ENCODE measurements at regions of chr1 and their contacts with region 1.

Region 1: DNA sequence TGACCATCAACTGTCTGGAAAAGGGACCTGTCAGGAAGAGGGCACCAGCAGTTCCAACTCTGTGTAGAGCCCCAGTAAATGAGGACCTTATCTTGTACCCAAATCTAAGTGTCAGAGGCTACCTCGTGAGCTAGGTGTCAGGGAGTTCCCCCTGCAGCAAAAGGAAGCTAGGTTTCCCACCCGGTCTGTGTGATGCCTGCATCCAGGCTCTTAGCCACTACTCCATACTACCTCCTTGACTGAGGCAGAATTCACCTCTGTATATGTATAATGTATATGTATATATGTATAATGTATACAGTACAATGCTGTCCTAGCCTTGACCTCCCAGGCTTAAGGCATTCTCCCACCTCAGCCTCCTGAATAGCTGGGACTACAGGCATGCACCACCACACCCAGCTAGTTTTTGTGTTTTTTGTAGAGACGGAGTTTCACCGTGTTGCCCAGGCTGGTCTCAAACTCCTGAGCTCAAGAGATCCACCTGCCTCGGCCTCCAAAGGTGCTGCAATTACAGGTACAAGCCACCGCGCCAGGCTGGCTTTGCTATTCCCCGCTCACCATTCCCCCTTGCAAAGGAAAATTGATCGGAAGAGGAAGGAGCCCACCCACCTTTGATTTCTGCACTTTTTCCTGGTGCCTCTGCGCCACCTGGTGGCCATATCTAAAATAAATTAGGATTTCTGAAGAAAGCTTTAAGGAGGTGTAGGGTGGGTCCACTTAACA is 15.7 kb upstream of the LUZP1 start:
- DNase-seq: peak; percentile 46
- ATAC-seq: peak; percentile 44
- H3K4me3 Mint-ChIP-seq: peak overlapping the region; percentile 49
- H3K27ac Mint-ChIP-seq: no peak overlapping the region
- H3K4me1 Mint-ChIP-seq: peaks cover 4% of the 10 kb centered on the region
- H3K27me3 Mint-ChIP-seq: no peaks in the 10 kb centered on the region

Region 2: DNA sequence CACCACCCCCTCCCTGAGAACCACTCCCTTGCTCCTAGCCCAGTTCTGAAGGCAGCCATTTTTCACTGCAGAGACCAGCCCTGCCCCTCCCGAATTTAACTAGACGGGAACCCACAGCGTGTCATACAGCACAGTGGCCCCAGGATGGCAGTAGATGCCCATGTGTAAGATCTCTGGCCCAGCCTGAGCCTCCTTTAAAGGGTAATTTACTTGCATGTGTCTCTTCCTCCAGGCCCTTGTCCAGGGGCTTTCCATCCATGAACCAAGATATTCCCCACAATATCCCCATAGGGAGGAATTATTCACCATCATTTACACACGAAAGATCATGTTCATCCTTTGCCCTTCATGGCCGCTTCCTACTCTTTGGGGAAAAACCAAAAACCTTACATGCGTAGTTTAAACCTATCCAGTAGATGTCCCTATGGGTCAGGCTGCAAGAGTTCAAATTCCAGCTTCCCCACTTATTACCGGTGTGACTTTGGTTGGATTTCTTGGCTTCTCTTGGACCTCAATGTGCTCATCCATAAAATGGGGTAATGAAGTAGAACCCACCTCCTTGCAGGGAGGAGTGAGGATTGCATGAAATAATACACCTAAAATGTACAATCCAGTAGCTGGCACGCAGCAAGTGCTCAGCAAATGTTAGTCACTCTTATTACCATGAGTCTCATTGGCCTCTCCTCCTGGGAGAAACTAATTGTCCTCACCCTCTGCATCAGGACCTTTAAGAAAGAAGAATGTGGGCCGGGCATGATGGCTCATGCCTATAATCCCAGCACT is 207.7 kb before region 1 on chr1:
- CTCF ChIA-PET with region 1: interaction called, 7 read pairs
- POLR2A ChIA-PET with region 1: no interaction called
- intact Hi-C with region 1: loop called (anchors 1 to 2 kb)
- DNase-seq: peak; percentile 74
- ATAC-seq: peak; percentile 95
- H3K4me3 Mint-ChIP-seq: no peak overlapping the region
- H3K27ac Mint-ChIP-seq: no peak overlapping the region
- H3K4me1 Mint-ChIP-seq: no peaks in the 10 kb centered on the region
- H3K27me3 Mint-ChIP-seq: peaks cover 13% of the 10 kb centered on the region

Region 3: DNA sequence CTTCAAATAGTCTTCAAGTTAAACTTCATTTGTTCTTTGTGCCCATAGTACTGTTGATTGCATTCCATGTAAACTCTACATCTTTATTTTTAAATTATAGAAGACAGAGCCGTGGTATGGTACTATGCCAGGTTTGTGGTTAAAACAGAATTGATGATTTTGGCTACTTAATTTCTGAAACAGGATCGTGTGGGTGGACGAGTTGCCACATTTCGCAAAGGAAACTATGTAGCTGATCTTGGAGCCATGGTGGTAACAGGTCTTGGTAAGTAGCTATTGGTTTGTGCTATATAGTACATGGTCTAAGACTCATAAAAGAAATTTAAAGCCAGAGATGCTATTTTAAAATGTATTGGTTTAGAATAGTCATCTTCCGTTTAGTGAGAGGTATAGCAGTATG is 127.1 kb before region 1 on chr1:
- CTCF ChIA-PET with region 1: interaction called, 15 read pairs
- POLR2A ChIA-PET with region 1: no interaction called
- intact Hi-C with region 1: no loop called
- DNase-seq: no peak
- ATAC-seq: peak; percentile 33
- H3K4me3 Mint-ChIP-seq: no peak overlapping the region
- H3K27ac Mint-ChIP-seq: no peak overlapping the region
- H3K4me1 Mint-ChIP-seq: no peaks in the 10 kb centered on the region
- H3K27me3 Mint-ChIP-seq: no peaks in the 10 kb centered on the region

Region 4: DNA sequence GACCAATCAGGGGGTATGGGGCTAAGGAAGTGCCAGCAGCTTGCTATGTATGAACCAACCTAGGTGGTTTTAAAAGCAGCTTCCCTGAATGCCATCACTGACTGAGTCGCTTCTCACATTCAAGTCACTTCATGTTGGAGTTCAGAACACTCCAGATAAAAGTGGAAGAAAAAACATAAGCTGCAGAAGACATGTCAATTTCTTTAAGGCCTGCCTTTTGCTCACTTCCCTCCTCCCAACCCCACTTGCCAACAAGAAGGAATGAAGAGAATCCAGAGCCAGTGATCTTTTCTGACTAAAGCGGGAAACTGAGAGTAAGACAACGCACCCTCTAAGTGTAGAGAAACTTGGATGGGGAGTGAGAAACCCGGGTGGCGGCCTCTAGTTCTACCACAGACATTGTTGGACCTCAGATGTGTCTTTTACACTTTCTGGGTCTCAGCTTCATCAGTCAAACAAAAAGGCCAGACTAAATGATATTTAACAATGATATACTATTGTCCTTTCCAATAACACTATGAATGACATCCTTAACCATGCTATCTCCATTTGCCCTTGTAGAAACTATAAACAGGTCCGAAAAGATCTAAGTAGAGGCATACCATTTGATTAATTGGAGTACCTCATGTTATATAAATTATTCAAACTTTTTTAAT is 69.8 kb before region 1 on chr1:
- CTCF ChIA-PET with region 1: interaction called, 73 read pairs
- POLR2A ChIA-PET with region 1: no interaction called
- intact Hi-C with region 1: no loop called
- DNase-seq: peak; percentile 18
- ATAC-seq: no peak
- H3K4me3 Mint-ChIP-seq: no peak overlapping the region
- H3K27ac Mint-ChIP-seq: no peak overlapping the region
- H3K4me1 Mint-ChIP-seq: peaks cover 74% of the 10 kb centered on the region
- H3K27me3 Mint-ChIP-seq: no peaks in the 10 kb centered on the region

Region 5: GRCh38 chr1:23159963-23160877 is 24.2 kb before region 1 on chr1:
- CTCF ChIA-PET with region 1: interaction called, 23 read pairs
- POLR2A ChIA-PET with region 1: no interaction called
- intact Hi-C with region 1: no loop called
- DNase-seq: no peak
- ATAC-seq: no peak
- H3K4me3 Mint-ChIP-seq: no peak overlapping the region
- H3K27ac Mint-ChIP-seq: no peak overlapping the region
- H3K4me1 Mint-ChIP-seq: peaks cover 4% of the 10 kb centered on the region
- H3K27me3 Mint-ChIP-seq: no peaks in the 10 kb centered on the region